BJ (cell line): ENCODE measurements at regions of chr21 and their contacts with region 1.

Region 1: GRCh38 chr21:36989699-36990507 is 16.6 kb upstream of the RIPPLY3 start:
- DNase-seq: peak; percentile 37
- H3K4me3 ChIP-seq: peak overlapping the region; percentile 58
- H3K27me3 ChIP-seq: no peaks in the 10 kb centered on the region
- CTCF ChIP-seq: peak; percentile 37; the same call in 1 of the 2 replicates

Region 2: GRCh38 chr21:35658242-35658641 is 1331.7 kb before region 1 on chr21:
- CTCF ChIA-PET with region 1: no interaction called
- POLR2A ChIA-PET with region 1: no interaction called
- DNase-seq: peak; percentile 70
- H3K4me3 ChIP-seq: no peak overlapping the region
- H3K27me3 ChIP-seq: no peaks in the 10 kb centered on the region
- CTCF ChIP-seq: no peak

Region 3: DNA sequence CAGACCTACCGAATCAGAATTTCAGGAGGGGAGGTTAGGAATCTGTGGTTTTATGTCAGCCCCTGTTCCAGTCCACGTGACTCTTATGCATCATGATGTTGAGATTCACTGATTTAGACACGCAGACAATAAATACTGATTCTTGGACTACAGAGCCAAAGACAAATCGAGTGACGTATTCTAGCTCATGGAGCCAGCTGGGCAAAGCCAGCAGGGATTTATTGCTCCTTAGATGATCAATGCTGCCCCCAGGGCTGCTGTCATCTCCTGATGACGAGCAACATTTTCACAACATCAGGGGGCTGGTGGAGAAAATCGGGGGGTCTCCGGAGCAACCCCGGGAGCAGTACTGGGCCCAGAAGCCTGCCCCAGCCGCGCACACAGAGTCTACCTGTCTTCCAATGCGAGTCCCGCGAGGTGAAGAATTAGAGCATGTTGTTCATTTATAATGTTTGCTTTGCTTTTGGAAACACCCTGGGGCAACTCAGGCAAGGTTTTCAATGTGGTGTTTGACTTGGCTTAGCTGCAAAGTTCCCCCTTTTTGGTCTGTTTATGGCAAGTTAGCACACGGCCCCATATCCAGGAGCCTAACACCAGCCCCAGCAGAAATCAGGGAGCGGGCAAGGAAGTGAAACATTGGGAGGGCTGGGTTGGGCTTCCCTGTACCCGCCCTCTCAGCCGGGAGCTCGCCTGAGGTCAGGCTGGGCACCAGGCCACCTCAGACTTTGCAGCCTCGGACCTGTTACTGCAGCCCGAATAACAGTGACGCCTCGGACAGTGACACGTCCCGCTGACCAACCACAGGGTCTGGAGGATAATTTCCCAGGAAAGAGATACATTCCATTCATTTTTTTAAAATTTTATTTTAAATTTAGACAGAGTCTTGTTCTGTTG is 490.1 kb before region 1 on chr21:
- CTCF ChIA-PET with region 1: no interaction called
- POLR2A ChIA-PET with region 1: no interaction called
- DNase-seq: peak; percentile 31
- H3K4me3 ChIP-seq: no peak overlapping the region
- H3K27me3 ChIP-seq: peaks cover 2% of the 10 kb centered on the region; the same call in 1 of the 2 replicates
- CTCF ChIP-seq: no peak

Region 4: DNA sequence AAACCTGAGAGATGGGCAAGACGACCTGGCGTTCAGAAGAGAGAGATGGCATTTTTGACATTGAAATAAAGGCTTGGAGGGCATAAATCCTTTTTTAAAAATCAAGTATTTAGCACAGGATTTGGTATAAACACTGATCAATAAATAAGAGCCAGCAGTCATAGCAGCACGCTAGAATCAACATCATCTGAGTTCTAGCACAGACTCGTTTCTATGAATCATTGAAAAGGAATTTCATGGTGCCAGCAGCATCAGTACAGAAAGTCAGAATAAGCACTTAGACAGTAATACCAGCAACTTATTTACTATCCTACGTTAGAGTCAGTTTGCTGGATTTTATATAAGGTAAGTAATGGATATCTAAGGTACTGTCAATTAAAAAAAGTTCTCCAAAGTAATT is 142.7 kb before region 1 on chr21:
- CTCF ChIA-PET with region 1: no interaction called
- POLR2A ChIA-PET with region 1: no interaction called
- DNase-seq: peak; percentile 33
- H3K4me3 ChIP-seq: no peak overlapping the region
- H3K27me3 ChIP-seq: no peaks in the 10 kb centered on the region
- CTCF ChIP-seq: no peak

Region 5: GRCh38 chr21:36966066-36966820 is 23.7 kb before region 1 on chr21 and contains the start of gene HLCS:
- CTCF ChIA-PET with region 1: interaction called, 11 read pairs
- POLR2A ChIA-PET with region 1: no interaction called
- DNase-seq: no peak
- H3K4me3 ChIP-seq: peak within 1 kb of the TSS; percentile 82
- H3K27me3 ChIP-seq: no peaks in the 10 kb centered on the region
- CTCF ChIP-seq: no peak
- polyA plus RNA-seq, gene HLCS: 16.9 and 23.3 TPM in 2 replicates

Region 6: DNA sequence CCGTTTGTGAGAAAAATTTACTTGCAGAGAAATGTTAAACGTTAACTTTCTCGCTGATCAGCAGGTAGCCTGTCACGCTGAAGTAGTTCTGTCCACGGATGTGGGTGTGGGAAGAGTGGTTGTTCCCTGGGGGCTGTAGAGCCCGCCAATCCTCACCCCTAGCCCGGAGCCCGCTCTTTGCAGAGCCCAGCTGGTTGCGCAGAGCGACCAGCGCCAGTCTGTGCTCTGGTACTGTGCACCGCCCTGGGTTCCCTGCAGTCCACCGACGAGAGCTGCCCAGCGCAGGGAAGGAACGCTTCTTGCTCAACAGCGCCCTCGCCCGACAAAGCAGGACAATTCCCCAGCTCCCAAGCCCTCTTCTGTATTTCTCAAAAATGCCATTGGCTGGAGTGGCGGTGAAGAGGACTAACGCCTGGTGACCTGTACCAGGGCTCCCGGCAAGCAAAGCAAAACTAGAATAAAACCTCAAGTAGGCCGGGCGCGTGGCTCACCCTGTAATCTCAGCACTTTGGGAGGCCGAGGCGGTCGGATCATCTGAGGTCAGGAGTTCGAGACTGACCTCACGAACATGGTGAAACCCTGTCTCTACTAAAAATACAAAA is 19.9 kb after region 1 on chr21:
- CTCF ChIA-PET with region 1: interaction called, 13 read pairs
- POLR2A ChIA-PET with region 1: no interaction called
- DNase-seq: no peak
- H3K4me3 ChIP-seq: no peak overlapping the region
- H3K27me3 ChIP-seq: peaks cover 3% of the 10 kb centered on the region; the same call in 1 of the 2 replicates
- CTCF ChIP-seq: peak; percentile 90

Region 7: DNA sequence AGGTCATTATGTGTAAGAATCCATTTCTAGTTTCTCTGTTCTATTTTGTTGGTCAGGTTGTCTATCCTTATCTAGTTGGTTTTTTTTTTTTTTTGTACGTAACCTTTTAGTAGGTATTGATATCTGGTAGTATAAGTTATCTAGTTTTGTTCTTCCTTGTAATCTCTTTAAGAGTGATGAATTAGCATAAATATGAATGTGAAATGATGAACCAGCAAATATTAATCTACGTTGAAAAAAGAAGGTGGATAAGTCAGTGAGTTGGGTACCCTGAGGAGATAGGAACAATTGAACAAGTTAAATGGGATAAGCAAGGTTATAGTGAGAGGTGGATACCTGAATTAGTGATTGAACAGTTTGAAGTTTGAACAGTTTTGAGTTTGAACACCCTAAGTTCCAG is 117.1 kb after region 1 on chr21:
- CTCF ChIA-PET with region 1: no interaction called
- POLR2A ChIA-PET with region 1: no interaction called
- DNase-seq: no peak
- H3K4me3 ChIP-seq: no peak overlapping the region
- H3K27me3 ChIP-seq: no peaks in the 10 kb centered on the region
- CTCF ChIP-seq: no peak